PC-3 (cell line): ENCODE measurements at regions of chr11 and their contacts with region 1.

Region 1: DNA sequence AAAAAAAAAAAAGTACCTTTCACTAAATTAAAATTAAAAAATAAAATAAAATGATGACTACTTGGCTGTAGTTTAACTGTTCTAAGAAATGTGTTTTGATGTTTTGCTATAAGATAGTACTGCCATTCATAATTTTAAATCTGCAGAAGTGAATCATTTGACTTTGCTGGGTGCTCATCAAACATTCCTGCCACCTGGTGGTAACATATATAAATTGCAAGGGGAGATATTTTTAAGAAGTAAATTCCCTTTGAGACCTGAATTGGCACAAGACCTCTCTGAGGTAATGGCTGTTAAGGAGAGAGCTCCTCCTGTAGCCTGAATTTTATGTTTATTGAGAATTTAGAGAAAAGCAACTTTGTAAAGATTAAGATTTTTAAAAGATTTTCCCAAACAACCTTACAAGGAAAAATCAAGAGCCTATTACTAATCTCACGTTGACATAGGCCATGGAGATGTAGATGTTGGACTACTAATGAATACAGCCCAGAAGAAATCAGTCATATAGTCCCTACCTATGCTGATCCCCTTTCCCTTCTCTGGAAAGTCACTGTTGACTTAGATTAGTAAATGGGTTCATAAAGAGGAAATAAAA is 11.9 kb upstream of the NARS2 start:
- DNase-seq: peak; percentile 62
- ATAC-seq: peak; percentile 56
- H3K4me3 ChIP-seq: no peak overlapping the region
- H3K27ac ChIP-seq: no peak overlapping the region
- H3K4me1 ChIP-seq: no peaks in the 10 kb centered on the region
- H3K27me3 ChIP-seq: peaks cover 14% of the 10 kb centered on the region; the same call in 1 of the 2 replicates
- CTCF ChIP-seq: peak; percentile 80

Region 2: DNA sequence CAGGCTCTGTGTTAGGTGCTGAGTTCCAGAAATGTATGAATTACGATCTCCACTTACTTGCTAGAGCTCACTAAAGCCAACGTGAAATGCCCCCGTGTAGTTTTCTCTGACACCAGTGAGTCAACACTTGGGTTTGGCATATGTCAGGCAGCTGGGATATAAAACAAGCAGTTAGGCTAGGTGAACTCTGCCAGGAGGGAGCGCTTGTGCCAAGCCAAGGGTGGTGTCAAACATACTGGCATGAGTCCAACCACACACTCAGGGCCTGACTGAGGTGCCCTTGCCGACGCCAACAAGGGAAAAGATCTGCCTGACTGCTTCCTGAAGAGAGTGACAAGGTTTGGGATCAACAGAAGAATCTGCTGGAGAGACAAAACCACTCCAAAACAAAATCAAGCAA is 155.9 kb after region 1 on chr11:
- CTCF ChIA-PET with region 1: no interaction called
- POLR2A ChIA-PET with region 1: no interaction called
- intact Hi-C with region 1: no loop called
- DNase-seq: peak; percentile 88
- ATAC-seq: peak; percentile 80
- H3K4me3 ChIP-seq: no peak overlapping the region
- H3K27ac ChIP-seq: peak overlapping the region; percentile 63
- H3K4me1 ChIP-seq: peaks cover 18% of the 10 kb centered on the region
- H3K27me3 ChIP-seq: no peaks in the 10 kb centered on the region
- CTCF ChIP-seq: peak; percentile 47

Region 3: GRCh38 chr11:78938971-78939370 is 352.4 kb after region 1 on chr11:
- CTCF ChIA-PET with region 1: no interaction called
- POLR2A ChIA-PET with region 1: interaction called, 21 read pairs
- intact Hi-C with region 1: no loop called
- DNase-seq: no peak
- ATAC-seq: no peak
- H3K4me3 ChIP-seq: no peak overlapping the region
- H3K27ac ChIP-seq: no peak overlapping the region
- H3K4me1 ChIP-seq: no peaks in the 10 kb centered on the region
- H3K27me3 ChIP-seq: no peaks in the 10 kb centered on the region
- CTCF ChIP-seq: no peak

Region 4: DNA sequence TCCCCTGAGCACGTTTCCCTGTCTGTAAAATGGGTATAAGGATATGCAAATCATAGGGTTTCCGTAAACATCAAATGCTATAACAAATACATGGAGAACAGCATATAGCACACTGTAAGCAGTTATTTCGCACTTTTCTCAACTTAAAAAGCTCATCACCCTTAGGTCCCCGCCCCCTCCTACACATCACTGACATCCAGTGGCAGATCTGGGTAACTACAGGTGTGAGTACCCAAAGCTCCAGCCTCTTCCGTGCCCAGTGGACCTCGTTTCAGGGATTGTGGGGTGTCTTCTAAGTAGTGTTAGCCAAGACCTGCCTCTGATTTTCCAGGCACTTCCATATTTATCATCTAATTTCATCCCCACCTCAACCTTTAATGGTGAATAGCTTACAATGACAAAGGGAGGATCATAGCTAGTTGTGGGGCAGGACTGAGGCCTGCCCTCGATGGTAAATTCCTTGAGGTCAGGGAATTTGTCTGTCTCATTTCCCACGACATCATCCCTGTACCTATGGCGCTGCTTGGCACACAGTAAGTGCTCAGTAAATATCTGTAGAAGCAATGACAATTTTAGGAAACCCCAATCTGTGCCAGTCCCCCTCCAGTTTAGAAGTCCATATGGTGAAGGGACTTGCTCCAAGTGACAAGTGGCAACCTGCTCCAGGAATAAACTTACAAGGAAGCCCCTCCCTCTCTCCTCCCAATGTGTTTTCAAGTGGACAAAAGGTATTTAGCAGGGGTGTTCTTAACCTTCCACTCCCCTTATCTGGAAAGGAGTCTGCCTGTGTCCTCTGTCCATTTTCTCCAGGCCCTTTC is 513.8 kb after region 1 on chr11:
- CTCF ChIA-PET with region 1: interaction called, 10 read pairs
- POLR2A ChIA-PET with region 1: no interaction called
- intact Hi-C with region 1: no loop called
- DNase-seq: peak; percentile 80
- ATAC-seq: peak; percentile 92
- H3K4me3 ChIP-seq: no peak overlapping the region
- H3K27ac ChIP-seq: no peak overlapping the region
- H3K4me1 ChIP-seq: no peaks in the 10 kb centered on the region
- H3K27me3 ChIP-seq: no peaks in the 10 kb centered on the region
- CTCF ChIP-seq: peak; percentile 93